Heart right ventricle (tissue), 16 donors: ENCODE measurements at regions of chr12 and their contacts with region 1.

Region 1: GRCh38 chr12:62259993-62260732 is at the start of gene USP15:
- DNase-seq: peak; percentile 97 to 98
- ATAC-seq: peak; percentile 97 to 99 (median 98)
- H3K4me3 ChIP-seq: peak within 1 kb of the TSS; percentile 72 to 99 (median 92)
- H3K27ac ChIP-seq: peak within 1 kb of the TSS; percentile 80 to 98 (median 93)
- H3K4me1 ChIP-seq: peaks cover 0 to 75% (median 48%) of the 10 kb centered on the region in 9 donors
- H3K27me3 ChIP-seq: no peaks in the 10 kb centered on the region
- CTCF ChIP-seq: peak; percentile 78 to 96 (median 82)
- total RNA-seq, gene USP15: 52.5 to 76.0 (median 63.9) TPM

Region 2: DNA sequence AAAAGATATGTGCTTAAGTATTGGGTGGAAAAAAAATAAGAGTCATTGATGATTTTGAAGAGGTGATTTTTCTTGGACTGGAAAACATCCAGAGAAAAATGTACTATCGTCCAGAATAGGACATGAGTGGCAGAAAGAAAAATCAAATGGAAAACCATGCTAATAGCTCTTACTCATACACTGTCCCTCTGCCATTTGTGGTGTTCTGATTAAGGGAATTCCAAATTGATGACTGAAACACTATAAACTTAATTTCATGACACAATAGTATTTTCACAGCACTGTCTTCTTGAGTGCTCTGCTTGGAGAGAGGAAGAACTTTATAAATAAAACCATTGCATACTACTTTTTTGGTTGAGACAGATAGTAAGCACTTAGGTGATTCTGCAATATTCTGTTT is 72.4 kb after region 1 on chr12:
- intact Hi-C with region 1: loop called in 1 of 10 experiments (anchors 10 kb)
- DNase-seq: no peak
- ATAC-seq: peak in 7 of 8 donors; percentile 20 to 93 (median 76)
- H3K4me3 ChIP-seq: no peak overlapping the region
- H3K27ac ChIP-seq: peak overlapping the region in 5 of 10 donors; percentile 20 to 67 (median 57)
- H3K4me1 ChIP-seq: peaks cover 0 to 46% (median 8%) of the 10 kb centered on the region in 9 donors
- H3K27me3 ChIP-seq: no peaks in the 10 kb centered on the region
- CTCF ChIP-seq: no peak

Region 3: GRCh38 chr12:62351326-62351725 is 91.2 kb after region 1 on chr12:
- intact Hi-C with region 1: loop called in 1 of 10 experiments (anchors 10 kb)
- DNase-seq: no peak
- ATAC-seq: no peak
- H3K4me3 ChIP-seq: no peak overlapping the region
- H3K27ac ChIP-seq: no peak overlapping the region
- H3K4me1 ChIP-seq: peaks cover 0 to 11% (median 0%) of the 10 kb centered on the region in 9 donors
- H3K27me3 ChIP-seq: no peaks in the 10 kb centered on the region
- CTCF ChIP-seq: no peak

Region 4: DNA sequence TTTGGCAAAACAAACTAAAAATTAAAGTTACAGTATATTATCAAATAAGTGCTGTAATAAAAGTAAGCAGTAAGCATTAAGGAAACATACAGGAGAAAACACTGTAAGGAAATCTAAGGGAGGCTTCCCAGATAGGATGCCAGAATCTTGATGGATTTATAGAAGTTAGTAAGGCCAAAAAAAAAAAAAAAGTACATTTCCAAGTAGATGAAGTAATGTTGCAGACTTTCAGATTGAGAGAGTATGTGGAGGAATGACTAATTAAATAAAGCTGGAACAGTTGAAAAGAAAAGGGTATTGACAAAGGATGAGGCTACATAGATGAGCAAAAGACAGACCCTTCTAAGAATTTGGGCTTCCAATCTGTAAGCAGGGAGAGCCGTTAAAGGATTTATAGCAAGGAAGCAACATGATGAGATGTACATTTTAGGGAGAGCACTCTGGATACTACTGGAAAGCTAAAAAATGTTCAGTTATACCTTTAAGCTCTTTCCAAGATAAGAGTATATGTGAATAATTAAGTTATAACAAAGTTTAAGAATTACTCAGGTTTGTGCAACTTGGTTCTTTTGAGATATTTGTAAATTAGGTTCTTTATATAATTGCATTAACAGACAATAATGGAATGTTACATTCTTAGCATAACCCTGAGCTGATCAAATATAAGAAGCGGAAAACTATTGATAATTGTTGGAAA is 119.0 kb after region 1 on chr12:
- intact Hi-C with region 1: loop called in 4 of 10 experiments (anchors 5 to 10 kb)
- DNase-seq: no peak
- ATAC-seq: no peak
- H3K4me3 ChIP-seq: no peak overlapping the region
- H3K27ac ChIP-seq: no peak overlapping the region
- H3K4me1 ChIP-seq: peaks cover 0 to 6% (median 0%) of the 10 kb centered on the region in 9 donors
- H3K27me3 ChIP-seq: no peaks in the 10 kb centered on the region
- CTCF ChIP-seq: no peak

Region 5: DNA sequence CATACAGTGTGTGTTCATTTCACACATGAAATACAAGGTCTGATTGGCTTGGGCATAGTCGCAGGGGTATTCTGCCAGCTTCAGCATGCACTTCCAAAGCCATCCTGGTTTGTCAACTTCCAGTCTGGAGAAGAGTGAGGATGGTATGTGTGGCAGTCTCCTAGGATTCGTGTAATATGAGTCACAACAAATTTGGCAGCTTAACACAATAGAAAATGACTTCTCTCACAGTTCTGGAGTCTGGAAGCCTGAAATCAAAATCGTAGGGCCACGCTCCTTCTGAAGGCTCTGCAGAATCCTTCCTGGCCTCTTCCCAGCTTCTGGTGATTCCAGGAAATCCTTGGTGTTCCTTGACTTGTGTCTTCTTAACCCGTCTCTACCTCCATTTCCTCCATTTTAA is 507.3 kb after region 1 on chr12:
- intact Hi-C with region 1: no loop called
- DNase-seq: no peak
- ATAC-seq: peak in 1 of 8 donors; percentile 31
- H3K4me3 ChIP-seq: no peak overlapping the region
- H3K27ac ChIP-seq: no peak overlapping the region
- H3K4me1 ChIP-seq: peaks cover 0 to 18% (median 2%) of the 10 kb centered on the region in 9 donors
- H3K27me3 ChIP-seq: no peaks in the 10 kb centered on the region
- CTCF ChIP-seq: no peak

Region 6: GRCh38 chr12:62848421-62848820 is 588.3 kb after region 1 on chr12:
- intact Hi-C with region 1: no loop called
- DNase-seq: no peak
- ATAC-seq: peak in 5 of 8 donors; percentile 25 to 56 (median 43)
- H3K4me3 ChIP-seq: no peak overlapping the region
- H3K27ac ChIP-seq: peak overlapping the region in 7 of 10 donors; percentile 13 to 78 (median 26)
- H3K4me1 ChIP-seq: peaks cover 3 to 72% (median 26%) of the 10 kb centered on the region in 9 donors
- H3K27me3 ChIP-seq: no peaks in the 10 kb centered on the region
- CTCF ChIP-seq: no peak